A549 (cell line): ENCODE measurements at regions of chr11 and their contacts with region 1.

Region 1: DNA sequence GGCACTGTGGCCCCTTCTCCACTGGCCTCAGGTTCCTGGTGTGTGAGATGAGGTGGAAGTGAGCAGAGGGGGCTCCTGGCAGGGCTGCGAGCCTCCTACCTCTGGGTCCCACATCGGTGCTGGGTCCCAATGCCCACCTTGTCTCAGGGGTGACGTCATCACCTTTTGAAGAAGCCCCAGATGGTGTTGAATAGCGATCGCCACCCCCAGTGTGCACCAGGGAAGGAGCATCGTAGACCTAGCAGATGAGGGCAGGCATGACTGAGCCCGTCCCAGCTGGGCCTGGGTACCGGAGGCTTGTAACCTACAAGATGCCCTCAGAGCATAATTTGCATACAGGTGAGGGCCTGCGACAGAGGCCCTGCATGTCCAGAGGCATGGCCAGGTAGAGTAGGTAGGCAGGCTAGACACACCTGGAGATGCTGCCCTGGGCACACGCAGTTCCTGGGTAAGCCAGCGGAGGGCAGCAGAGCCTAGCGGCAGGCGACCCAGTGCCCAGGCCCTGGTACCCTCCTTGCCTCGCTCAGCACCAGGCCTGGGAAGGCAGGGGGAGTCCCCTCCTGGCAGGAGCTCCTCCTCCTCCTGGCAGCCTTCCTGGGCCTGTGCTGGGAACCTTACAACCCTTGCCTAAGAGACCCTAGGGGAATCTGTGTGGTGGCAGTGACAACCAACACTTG is 52.5 kb downstream of the TPCN2 start:
- DNase-seq: peak; percentile 81 to 91
- ATAC-seq: peak; percentile 80 to 89
- H3K4me3 ChIP-seq: no peak overlapping the region
- H3K27ac ChIP-seq: peak overlapping the region; percentile 63 to 71; a peak in 5 of 6 replicates
- H3K4me1 ChIP-seq: peaks cover 28% of the 10 kb centered on the region
- CTCF ChIP-seq: peak; percentile 97
- EP300 ChIP-seq: no peak
- POLR2A ChIP-seq: no peak
- RAD21 ChIP-seq: peak; percentile 99

Region 2: DNA sequence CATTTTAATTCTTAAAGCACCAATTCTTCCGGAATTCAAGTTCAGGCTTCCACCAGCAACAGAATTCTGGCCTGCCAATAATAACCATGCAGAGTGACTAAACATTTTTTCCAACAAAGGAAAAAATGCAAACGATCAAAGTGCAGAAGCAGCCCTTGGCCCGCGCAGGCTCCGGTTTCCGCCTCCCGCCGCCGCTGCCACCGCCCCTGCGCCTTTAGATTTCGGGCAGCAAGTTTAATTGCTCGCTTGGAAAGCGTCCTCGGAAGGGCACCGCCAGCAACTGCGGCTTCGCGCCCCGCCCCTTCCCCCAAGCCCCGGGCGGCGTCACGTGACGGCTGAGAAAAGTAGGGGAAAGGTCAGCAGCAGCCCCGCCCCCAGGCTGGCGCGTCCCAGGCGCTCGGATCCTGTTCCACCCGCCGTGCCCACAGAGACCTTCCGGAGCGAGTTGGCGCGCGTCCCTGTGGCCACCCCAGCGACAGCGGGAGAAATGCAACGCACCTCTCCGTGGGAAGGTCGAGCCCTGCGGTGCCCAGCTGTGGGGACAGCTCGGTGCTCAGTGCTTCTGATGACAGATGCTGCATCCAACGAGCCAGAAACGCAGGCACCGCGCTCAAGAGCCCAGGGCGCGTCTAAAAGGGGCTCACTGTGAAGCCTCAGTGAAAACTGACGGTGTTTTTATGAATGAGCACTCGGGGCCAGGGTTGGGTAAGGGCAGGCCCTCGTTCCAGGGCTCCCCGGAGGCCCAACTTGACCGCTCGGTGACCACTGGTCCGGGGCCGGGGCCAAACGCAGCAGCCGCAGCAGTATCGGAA is 262.0 kb before region 1 on chr11:
- CTCF ChIA-PET with region 1: no interaction called
- POLR2A ChIA-PET with region 1: no interaction called
- DNase-seq: peak; percentile 91 to 94
- ATAC-seq: peak; percentile 44 to 72
- H3K4me3 ChIP-seq: peak overlapping the region; percentile 46
- H3K27ac ChIP-seq: peak overlapping the region; percentile 80 to 93
- H3K4me1 ChIP-seq: peaks cover 34% of the 10 kb centered on the region
- CTCF ChIP-seq: no peak
- EP300 ChIP-seq: no peak
- POLR2A ChIP-seq: no peak; the same call in 1 of the 2 replicates
- RAD21 ChIP-seq: 0 out of 5 replicates have a peak, but pooled peaks of 1 of the 2 experiments have one; percentile 8

Region 3: DNA sequence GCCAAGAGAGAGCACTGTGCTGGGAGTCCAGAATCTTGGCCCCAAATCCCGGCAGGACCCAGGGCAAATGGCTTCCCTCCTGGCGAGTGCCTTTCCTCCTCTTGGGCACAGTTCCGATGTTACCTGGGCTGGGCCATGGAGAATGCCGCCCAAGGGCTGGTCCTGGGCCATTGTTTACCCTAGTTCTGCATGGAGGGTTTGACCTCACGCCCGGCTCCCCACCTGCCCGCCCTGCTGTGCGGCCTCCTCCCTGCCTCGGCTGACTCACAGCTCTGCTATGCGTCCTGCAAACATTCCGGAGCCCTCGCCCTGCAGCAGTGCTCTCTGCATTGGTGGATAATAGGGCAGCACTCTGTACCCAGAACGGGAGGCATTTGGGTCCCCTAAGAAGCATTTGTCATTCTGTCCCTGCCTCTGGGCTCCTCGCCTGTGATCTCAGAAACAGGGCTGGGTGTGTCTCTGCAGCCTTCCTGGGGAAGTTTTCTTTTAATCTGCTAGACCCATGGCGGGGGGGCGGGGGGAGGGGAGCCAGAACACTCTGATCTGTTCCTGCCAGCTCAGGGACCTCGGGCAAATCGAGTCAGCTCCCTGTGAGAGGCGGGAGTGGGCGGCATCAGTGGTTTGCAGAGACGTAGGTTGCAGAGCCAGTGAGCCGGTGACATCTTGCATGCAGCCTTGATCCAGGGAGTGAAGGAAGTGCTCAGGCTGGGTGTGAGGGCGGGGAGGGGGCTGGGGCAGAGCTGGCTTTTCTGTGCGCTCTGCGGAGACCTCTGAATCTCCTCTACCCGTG is 21.6 kb after region 1 on chr11:
- CTCF ChIA-PET with region 1: interaction called, 41 read pairs
- POLR2A ChIA-PET with region 1: interaction called, 3 read pairs
- DNase-seq: peak; percentile 97 to 99
- ATAC-seq: peak; percentile 90 to 96
- H3K4me3 ChIP-seq: peak overlapping the region; percentile 28; the same call in 1 of the 3 replicates
- H3K27ac ChIP-seq: peak overlapping the region; percentile 91 to 98
- H3K4me1 ChIP-seq: peaks cover 37% of the 10 kb centered on the region
- CTCF ChIP-seq: no peak
- EP300 ChIP-seq: peak; percentile 86 to 91; a peak in 4 of 5 replicates
- POLR2A ChIP-seq: peak; percentile 18; the same call in 1 of the 2 replicates
- RAD21 ChIP-seq: peak; percentile 45 to 55; a peak in 4 of 5 replicates

Region 4: DNA sequence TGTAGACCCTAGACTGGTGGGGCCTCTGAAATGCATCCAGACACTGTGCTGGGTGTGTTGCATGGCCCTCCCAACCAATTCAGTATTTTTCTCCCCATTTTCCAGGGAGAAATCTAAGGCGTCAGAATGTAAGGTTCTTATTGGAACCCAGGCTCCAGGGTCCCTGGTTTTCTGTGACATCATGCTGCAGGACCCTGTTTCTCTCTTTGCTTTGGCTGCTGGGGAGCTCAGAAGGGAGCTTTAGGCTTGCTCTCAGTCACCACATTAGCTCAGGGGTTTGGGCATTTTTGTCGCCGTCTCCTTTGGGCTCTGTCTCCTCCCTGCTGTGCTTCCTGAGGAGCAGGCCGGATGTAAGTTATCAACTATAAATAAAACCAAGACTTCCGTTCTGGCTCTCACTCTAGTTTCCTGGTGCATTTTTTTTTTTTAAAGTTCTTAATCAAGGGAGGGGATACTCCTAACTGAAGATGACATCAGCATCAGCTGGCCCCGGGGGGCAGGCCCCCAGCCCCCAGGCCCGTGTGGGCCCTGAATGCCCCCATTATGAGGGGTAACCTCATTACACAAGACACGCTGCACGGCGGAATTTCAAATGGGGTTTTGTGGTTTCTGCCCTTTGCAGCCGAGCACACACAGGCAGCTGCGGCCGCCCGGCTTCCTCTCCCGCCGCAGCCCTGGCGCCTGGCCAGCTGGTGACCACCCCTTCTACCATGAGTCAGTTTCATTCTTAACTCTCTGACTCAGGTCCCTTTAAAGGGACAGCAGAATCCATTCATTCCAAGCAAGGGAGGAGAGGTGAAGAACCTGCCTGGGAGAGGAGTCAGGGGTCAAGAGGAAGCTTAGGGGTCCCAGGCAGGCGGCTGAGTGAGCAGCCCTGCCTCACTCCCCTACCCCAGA is 195.9 kb after region 1 on chr11:
- CTCF ChIA-PET with region 1: interaction called, 34 read pairs
- POLR2A ChIA-PET with region 1: interaction called, 3 read pairs
- DNase-seq: peak; percentile 93 to 97
- ATAC-seq: peak; percentile 15 to 34
- H3K4me3 ChIP-seq: peak overlapping the region; percentile 69
- H3K27ac ChIP-seq: peak overlapping the region; percentile 93 to 98
- H3K4me1 ChIP-seq: peaks cover 75% of the 10 kb centered on the region
- CTCF ChIP-seq: no peak
- EP300 ChIP-seq: peak; percentile 87 to 95; a peak in 4 of 5 replicates
- POLR2A ChIP-seq: no peak
- RAD21 ChIP-seq: peak; percentile 1 to 66; a peak in 3 of 5 replicates

Region 5: GRCh38 chr11:69642913-69643632 is 541.8 kb after region 1 on chr11:
- CTCF ChIA-PET with region 1: interaction called, 262 read pairs
- POLR2A ChIA-PET with region 1: interaction called, 7 read pairs
- DNase-seq: peak; percentile 55 to 80
- ATAC-seq: peak; percentile 13 to 41; a peak in 4 of 6 replicates
- H3K4me3 ChIP-seq: peak overlapping the region; percentile 91
- H3K27ac ChIP-seq: peak overlapping the region; percentile 95 to 96
- H3K4me1 ChIP-seq: peaks cover 45% of the 10 kb centered on the region
- CTCF ChIP-seq: peak; percentile 90
- EP300 ChIP-seq: no peak
- POLR2A ChIP-seq: no peak
- RAD21 ChIP-seq: peak; percentile 74 to 97

Region 6: DNA sequence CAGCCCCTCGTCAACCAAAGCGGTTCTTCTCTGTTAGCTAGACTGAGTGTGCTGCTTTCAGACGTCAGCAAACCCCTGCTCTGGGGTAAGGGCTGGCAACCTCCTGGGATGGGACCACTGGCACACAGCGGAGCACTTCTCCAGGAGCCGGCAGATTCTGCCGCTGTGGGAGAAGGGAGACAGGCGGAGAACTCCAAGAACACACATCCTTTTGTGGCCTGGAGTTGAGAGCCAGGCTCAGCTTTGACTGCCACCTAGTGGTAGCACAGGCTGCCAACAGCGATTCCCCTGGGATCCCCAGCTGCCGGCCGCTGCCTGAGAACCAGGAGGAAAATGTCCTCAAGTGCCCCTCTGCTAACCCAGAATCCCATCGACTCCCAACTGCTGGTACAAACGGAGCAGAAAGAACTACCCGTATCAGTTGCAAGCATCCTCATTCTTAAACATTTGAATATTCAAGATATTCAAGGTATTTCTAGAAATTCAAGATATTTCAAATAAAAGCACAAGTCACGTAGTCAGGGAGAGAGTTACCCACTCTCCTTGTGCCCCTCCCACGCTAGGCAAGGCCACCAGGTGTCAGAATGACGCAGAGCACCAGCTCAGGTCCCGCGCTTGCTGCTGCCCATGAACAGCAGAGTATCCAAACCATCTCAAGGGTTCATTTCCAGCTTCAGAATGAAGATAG is 569.0 kb after region 1 on chr11:
- CTCF ChIA-PET with region 1: interaction called, 220 read pairs
- POLR2A ChIA-PET with region 1: interaction called, 3 read pairs
- DNase-seq: peak; percentile 87 to 90
- ATAC-seq: peak; percentile 80 to 81
- H3K4me3 ChIP-seq: no peak overlapping the region
- H3K27ac ChIP-seq: peak overlapping the region; percentile 49 to 72; a peak in 4 of 6 replicates
- H3K4me1 ChIP-seq: peaks cover 24% of the 10 kb centered on the region
- CTCF ChIP-seq: peak; percentile 93
- EP300 ChIP-seq: no peak
- POLR2A ChIP-seq: no peak
- RAD21 ChIP-seq: peak; percentile 92